Astrocyte of the cerebellum (primary cell): ENCODE measurements at regions of chr14 and their contacts with region 1.

Region 1: GRCh38 chr14:64303471-64303917 is 9.3 kb upstream of the ESR2 start:
- DNase-seq: peak; percentile 53
- H3K4me3 ChIP-seq: no peak overlapping the region
- CTCF ChIP-seq: peak; percentile 62

Region 2: GRCh38 chr14:63388763-63389431 is 914.6 kb before region 1 on chr14:
- in situ Hi-C with region 1: loop called (anchors 10 kb)
- DNase-seq: peak; percentile 33
- H3K4me3 ChIP-seq: no peak overlapping the region
- CTCF ChIP-seq: peak; percentile 86

Region 3: GRCh38 chr14:63933110-63933509 is 370.4 kb before region 1 on chr14:
- in situ Hi-C with region 1: no loop called
- DNase-seq: no peak
- H3K4me3 ChIP-seq: no peak overlapping the region
- CTCF ChIP-seq: no peak

Region 4: GRCh38 chr14:64232095-64232838 is 71.2 kb before region 1 on chr14:
- in situ Hi-C with region 1: no loop called
- DNase-seq: peak; percentile 88
- H3K4me3 ChIP-seq: no peak overlapping the region
- CTCF ChIP-seq: no peak